ENCODE measurements at regions of chr1 and their contacts with region 1.

Region 1: DNA sequence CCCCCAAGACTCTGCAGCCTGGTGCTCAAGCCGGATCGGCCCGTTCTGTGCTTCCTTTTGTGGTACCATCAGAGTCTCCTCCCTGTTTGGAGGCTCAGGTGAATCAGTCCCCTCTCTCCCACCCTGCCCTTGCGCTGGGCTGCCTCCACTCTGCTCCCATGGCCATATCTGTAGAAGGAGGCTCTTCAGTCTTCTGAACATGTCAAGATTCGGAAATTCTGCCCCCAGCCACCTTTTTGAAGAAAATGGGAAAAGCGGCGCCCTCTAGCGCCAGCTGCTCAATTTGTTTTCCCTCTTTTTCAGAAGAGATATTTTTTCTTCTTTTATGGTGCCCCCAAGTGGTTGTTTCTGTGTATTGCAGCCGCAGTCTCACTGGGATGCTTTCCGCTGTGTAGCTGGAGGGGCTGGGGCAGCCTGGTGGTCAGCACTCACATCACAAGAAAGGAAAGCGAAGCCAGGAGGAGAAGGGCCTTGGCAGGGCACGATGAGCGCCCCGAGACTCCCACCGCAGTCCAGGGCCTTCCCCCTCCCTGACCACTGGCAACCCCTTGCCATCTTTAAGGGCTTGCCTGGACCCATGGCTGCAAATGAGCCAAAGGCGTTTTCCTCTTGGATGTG is 58.4 kb upstream of the CACNA1E start:
- DNase-seq: peak; percentile 68
- ATAC-seq: peak; percentile 31

Region 2: GRCh38 chr1:181189691-181190363 is 235.1 kb before region 1 on chr1:
- intact Hi-C with region 1: loop called (anchors 1 kb)
- DNase-seq: peak; percentile 86
- ATAC-seq: peak; percentile 89

Region 3: DNA sequence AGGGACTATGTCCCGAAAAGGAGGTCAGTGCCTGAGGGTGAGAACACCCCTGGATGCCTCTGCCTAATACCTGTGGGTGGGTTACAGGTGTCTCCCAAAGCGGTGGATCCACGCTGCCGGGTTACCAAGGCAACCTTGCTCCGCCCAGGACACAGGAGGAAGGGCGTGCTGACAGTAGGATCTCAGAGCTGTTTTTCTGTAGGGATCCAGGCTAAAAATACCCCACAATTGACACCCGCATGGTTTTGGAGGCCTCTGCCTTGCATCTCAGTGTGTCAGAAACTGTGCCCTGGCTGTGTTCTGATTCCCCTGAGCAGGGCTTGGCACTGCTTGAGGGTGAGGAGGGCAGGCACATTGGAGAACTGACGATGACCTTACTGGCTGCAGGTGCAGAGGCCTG is 218.4 kb before region 1 on chr1:
- intact Hi-C with region 1: loop called (anchors 5 kb)
- DNase-seq: no peak
- ATAC-seq: peak; percentile 93